Activated naive CD4-positive, alpha-beta T cell treated with anti-CD3 and anti-CD28 coated beads for 36 hours (primary cell): ENCODE measurements at regions of chr6 and their contacts with region 1.

Region 1: DNA sequence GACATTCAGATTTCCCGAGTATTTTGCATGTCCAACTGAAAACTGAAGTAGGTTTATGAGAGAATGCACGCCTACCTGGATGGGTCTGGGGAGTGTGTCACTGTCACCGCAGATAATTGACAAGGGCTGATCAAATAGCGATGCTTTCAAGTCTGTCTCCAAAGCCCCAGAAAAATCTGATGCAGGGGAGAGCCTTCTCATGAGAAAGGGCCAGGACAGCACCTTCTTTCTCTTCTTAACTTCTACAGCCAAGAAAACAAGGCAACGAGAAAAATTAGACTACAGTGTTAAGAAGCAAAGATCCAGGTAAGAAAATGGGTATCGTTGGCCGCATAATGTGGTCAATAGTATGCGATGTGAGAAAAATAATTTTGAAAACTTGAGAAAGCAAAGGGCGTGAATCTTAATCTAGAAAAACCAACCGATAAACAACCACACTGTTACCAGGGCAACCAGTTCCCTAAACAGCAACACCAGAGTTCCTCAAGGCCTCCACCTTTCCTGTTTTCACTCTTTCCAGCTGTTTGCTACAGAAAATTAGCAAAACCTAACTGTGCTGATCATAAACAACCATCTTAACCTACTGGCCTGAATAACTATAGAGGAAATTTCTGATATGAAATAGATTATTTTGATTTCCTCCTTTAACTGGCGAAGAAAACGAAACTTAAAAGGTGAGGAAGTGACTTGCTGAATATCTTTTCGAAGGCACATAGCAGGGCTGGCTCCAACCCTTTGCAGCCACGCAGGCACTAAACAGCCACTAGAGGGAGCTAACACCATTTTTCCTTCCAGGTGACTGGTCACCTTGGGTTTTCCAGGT is 2.6 kb downstream of the TAGAP start:
- DNase-seq: peak; percentile 86
- H3K4me3 Mint-ChIP-seq: peak overlapping the region; percentile 96
- H3K27ac Mint-ChIP-seq: peak overlapping the region; percentile 98
- H3K4me1 Mint-ChIP-seq: peaks cover 69% of the 10 kb centered on the region
- H3K27me3 Mint-ChIP-seq: no peaks in the 10 kb centered on the region

Region 2: DNA sequence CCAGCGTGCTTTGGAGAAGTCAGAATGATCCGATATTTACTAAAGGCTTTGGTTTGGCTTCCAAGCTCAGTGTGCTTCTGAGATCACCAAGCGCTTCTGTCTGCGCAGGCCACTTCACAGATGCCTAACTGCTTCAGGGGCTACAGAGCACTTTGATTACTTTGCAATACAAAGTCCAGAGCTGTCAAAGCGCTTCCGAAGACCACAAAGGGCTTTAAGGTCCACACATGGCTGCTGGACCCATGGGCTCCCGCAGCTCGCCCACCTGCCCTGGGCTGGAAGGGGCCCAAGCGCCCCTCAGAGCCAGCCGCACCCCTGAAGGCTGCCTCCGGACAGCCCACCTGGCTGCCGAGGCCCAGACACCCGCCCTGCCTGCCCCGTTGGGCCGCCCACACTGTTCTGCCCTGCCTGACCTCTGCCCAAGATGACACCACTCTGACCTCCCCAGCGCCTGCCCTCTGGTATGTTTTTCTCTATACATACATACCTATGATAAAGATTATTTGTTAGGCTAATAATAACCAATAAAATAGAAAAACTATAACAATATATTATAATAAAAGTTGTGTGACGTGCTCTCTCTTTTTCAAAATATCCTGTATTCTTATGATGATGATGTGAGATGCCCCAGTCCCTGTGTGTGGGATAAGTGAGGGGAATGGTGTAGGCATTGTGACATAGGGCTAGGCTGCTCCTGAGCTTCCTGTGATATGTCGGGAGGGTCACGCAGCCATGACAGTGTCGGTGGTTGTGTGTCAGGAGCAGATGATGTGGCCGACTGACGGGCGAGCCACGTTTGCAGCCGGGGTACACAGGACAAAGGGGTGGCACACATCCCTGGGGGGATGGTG is 420.3 kb before region 1 on chr6:
- CTCF ChIA-PET with region 1: no interaction called
- intact Hi-C with region 1: no loop called
- DNase-seq: no peak
- H3K4me3 Mint-ChIP-seq: no peak overlapping the region
- H3K27ac Mint-ChIP-seq: peak overlapping the region; percentile 67
- H3K4me1 Mint-ChIP-seq: peaks cover 14% of the 10 kb centered on the region
- H3K27me3 Mint-ChIP-seq: no peaks in the 10 kb centered on the region

Region 3: GRCh38 chr6:158958504-158959386 is 83.5 kb before region 1 on chr6:
- CTCF ChIA-PET with region 1: no interaction called
- intact Hi-C with region 1: no loop called
- DNase-seq: peak; percentile 45
- H3K4me3 Mint-ChIP-seq: no peak overlapping the region
- H3K27ac Mint-ChIP-seq: no peak overlapping the region
- H3K4me1 Mint-ChIP-seq: no peaks in the 10 kb centered on the region
- H3K27me3 Mint-ChIP-seq: no peaks in the 10 kb centered on the region

Region 4: GRCh38 chr6:158978757-158979156 is 63.5 kb before region 1 on chr6:
- CTCF ChIA-PET with region 1: no interaction called
- intact Hi-C with region 1: no loop called
- DNase-seq: no peak
- H3K4me3 Mint-ChIP-seq: no peak overlapping the region
- H3K27ac Mint-ChIP-seq: no peak overlapping the region
- H3K4me1 Mint-ChIP-seq: no peaks in the 10 kb centered on the region
- H3K27me3 Mint-ChIP-seq: no peaks in the 10 kb centered on the region

Region 5: DNA sequence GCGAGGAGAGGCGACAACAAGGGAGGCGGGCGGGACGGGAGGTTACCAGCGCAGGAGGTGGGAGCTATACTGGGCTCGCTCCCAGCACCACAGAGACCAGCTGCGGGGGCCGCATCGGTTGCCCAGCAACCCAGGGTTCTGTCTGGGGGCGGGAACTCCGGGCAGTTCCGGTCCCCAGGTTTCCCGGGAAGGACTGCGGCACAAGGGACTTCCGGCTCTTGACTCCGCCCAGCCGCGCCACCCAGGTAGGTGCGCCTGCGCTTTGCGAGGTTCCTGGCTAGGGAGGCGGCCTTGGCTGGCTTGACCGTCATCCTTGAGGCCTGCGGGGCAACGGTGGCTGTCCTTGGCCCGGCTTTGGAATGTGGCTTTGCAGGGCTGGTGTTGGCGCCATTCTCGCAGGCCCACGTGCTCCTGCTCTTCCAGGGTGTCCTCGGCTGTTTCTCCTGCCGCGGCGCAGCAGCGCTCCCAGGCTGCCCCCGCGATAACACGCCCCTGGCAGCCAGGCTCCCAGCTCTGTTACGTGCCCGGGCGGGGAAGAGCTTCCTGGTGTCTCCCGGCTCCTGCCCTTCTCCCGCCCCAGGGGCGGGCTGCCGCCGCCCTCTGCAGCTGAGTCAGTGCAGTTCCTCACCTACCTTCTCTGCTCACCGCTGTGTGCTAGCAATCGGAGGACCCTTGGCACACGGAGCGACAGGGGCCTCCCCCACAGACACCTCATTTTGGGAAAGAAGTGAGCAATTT is 42.4 kb before region 1 on chr6 and contains the start of gene RSPH3:
- CTCF ChIA-PET with region 1: interaction called, 3 read pairs
- intact Hi-C with region 1: loop called (anchors 1 kb)
- DNase-seq: peak; percentile 94
- H3K4me3 Mint-ChIP-seq: peak within 1 kb of the TSS; percentile 98
- H3K27ac Mint-ChIP-seq: peak within 1 kb of the TSS; percentile 82
- H3K4me1 Mint-ChIP-seq: peaks cover 45% of the 10 kb centered on the region
- H3K27me3 Mint-ChIP-seq: no peaks in the 10 kb centered on the region
- total RNA-seq, gene RSPH3: 3.0 to 3.2 TPM

Region 6: DNA sequence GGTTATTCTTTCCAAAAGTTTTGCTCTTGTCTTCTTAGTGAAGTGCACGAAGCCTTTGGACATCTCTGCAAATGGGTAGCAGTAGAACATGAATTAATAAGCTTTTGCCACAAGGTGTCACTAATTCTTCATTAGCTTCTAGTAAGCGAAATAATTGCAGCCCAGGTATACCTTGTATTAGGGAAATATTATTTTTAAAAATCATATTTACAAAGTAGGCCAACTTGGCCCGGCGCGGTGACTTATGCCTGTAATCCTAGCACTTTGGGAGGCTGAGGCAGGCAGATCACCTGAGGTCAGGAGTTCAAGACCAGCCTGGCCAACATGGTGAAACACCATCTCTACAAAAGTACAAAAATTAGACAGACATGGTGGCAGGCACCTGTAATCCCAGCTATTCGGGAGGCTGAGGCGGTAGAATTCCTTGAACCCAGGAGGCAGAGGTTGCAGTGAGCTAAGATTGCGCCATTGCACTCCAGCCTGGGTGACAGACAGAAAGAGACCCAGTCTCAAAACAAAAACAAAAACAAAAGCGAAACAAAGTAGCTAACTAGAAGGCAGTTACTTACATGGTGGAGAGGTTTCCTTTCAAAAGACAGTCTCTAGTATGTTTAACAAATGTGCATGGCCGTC is 33.4 kb before region 1 on chr6:
- CTCF ChIA-PET with region 1: interaction called, 23 read pairs
- intact Hi-C with region 1: no loop called
- DNase-seq: no peak
- H3K4me3 Mint-ChIP-seq: no peak overlapping the region
- H3K27ac Mint-ChIP-seq: no peak overlapping the region
- H3K4me1 Mint-ChIP-seq: peaks cover 29% of the 10 kb centered on the region
- H3K27me3 Mint-ChIP-seq: no peaks in the 10 kb centered on the region

Region 7: GRCh38 chr6:159017757-159018559 is 24.3 kb before region 1 on chr6:
- CTCF ChIA-PET with region 1: interaction called, 21 read pairs
- intact Hi-C with region 1: loop called (anchors 1 kb)
- DNase-seq: no peak
- H3K4me3 Mint-ChIP-seq: no peak overlapping the region
- H3K27ac Mint-ChIP-seq: peak overlapping the region; percentile 68
- H3K4me1 Mint-ChIP-seq: peaks cover 47% of the 10 kb centered on the region
- H3K27me3 Mint-ChIP-seq: no peaks in the 10 kb centered on the region

Region 8: GRCh38 chr6:159056003-159056402 is 13.8 kb after region 1 on chr6:
- CTCF ChIA-PET with region 1: interaction called, 24 read pairs
- intact Hi-C with region 1: loop called (anchors 1 kb)
- DNase-seq: peak; percentile 41
- H3K4me3 Mint-ChIP-seq: peak overlapping the region; percentile 22
- H3K27ac Mint-ChIP-seq: peak overlapping the region; percentile 91
- H3K4me1 Mint-ChIP-seq: peaks cover 60% of the 10 kb centered on the region
- H3K27me3 Mint-ChIP-seq: no peaks in the 10 kb centered on the region

Region 9: GRCh38 chr6:159080217-159080976 is 38.2 kb after region 1 on chr6:
- CTCF ChIA-PET with region 1: interaction called, 5 read pairs
- intact Hi-C with region 1: loop called (anchors 1 kb)
- DNase-seq: peak; percentile 79
- H3K4me3 Mint-ChIP-seq: peak overlapping the region; percentile 9
- H3K27ac Mint-ChIP-seq: peak overlapping the region; percentile 89
- H3K4me1 Mint-ChIP-seq: peaks cover 49% of the 10 kb centered on the region
- H3K27me3 Mint-ChIP-seq: no peaks in the 10 kb centered on the region

Region 10: DNA sequence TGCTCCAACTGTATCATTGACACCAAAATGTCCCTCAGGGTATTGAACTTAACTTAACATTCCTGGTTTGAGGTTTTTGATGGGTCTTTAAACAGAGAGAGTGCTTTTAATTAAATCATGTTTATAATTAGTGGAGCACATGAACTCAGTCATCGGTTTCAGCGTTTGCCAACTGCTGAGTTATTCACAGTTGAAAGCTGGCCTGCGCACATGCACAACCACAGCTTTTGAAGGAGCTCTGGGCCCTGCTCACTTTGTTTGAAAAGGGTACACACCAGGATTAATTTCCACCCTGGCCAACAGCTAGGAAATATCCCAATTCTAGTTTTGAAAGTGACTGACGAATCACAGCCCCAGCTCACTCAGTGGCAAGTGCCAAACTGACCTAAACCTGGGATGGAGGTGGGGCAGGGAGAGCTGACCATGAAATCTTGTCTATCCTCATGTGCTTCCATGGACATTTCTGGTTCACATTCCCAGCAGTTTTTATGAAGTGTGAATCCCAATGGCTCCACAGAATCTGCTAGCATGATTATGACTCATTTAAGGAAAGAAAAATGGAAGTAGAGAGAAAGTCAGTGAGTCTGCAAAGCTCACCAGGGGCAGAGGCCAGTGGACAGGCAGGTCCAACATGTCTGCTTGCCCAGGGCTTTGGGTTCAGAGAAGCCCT is 374.8 kb after region 1 on chr6:
- CTCF ChIA-PET with region 1: no interaction called
- intact Hi-C with region 1: no loop called
- DNase-seq: no peak
- H3K4me3 Mint-ChIP-seq: no peak overlapping the region
- H3K27ac Mint-ChIP-seq: no peak overlapping the region
- H3K4me1 Mint-ChIP-seq: no peaks in the 10 kb centered on the region
- H3K27me3 Mint-ChIP-seq: peaks cover 6% of the 10 kb centered on the region